ENCODE measurements at regions of chr7 and their contacts with region 1.

Region 1: GRCh38 chr7:104548868-104549267 is 220.5 kb downstream of the LHFPL3 start:
- DNase-seq: no peak
- ATAC-seq: no peak
- H3K4me3 ChIP-seq: no peak overlapping the region
- H3K27ac ChIP-seq: no peak overlapping the region
- H3K4me1 ChIP-seq: no peaks in the 10 kb centered on the region
- H3K27me3 ChIP-seq: no peaks in the 10 kb centered on the region
- CTCF ChIP-seq: 0 out of 6 replicates have a peak, but pooled peaks of 1 of the 3 experiments have one; percentile 7
- EP300 ChIP-seq: no peak
- POLR2A ChIP-seq: no peak
- RAD21 ChIP-seq: no peak

Region 2: GRCh38 chr7:104267701-104268368 is 281.0 kb before region 1 on chr7:
- CTCF ChIA-PET with region 1: no interaction called
- POLR2A ChIA-PET with region 1: no interaction called
- RAD21 ChIA-PET with region 1: no interaction called
- SMC1A ChIA-PET with region 1: no interaction called
- in situ Hi-C with region 1: no loop called
- intact Hi-C with region 1: loop called (anchors 10 kb)
- DNase-seq: no peak
- ATAC-seq: no peak
- H3K4me3 ChIP-seq: no peak overlapping the region
- H3K27ac ChIP-seq: no peak overlapping the region
- H3K4me1 ChIP-seq: no peaks in the 10 kb centered on the region
- H3K27me3 ChIP-seq: no peaks in the 10 kb centered on the region
- CTCF ChIP-seq: peak; percentile 43 to 52 (median 46); a peak in 5 of 6 replicates
- EP300 ChIP-seq: no peak
- POLR2A ChIP-seq: no peak
- RAD21 ChIP-seq: peak; percentile 31

Region 3: GRCh38 chr7:104956753-104957450 is 408.0 kb after region 1 on chr7:
- CTCF ChIA-PET with region 1: no interaction called
- POLR2A ChIA-PET with region 1: no interaction called
- RAD21 ChIA-PET with region 1: no interaction called
- SMC1A ChIA-PET with region 1: no interaction called
- in situ Hi-C with region 1: no loop called
- intact Hi-C with region 1: no loop called
- DNase-seq: peak; percentile 77
- ATAC-seq: peak; percentile 94
- H3K4me3 ChIP-seq: no peak overlapping the region
- H3K27ac ChIP-seq: peak overlapping the region; percentile 58
- H3K4me1 ChIP-seq: peaks cover 17% of the 10 kb centered on the region
- H3K27me3 ChIP-seq: no peaks in the 10 kb centered on the region
- CTCF ChIP-seq: no peak
- EP300 ChIP-seq: peak; percentile 83 to 91
- POLR2A ChIP-seq: no peak
- RAD21 ChIP-seq: no peak

Region 4: GRCh38 chr7:106480161-106480579 is 1931.3 kb after region 1 on chr7:
- CTCF ChIA-PET with region 1: no interaction called
- POLR2A ChIA-PET with region 1: no interaction called
- RAD21 ChIA-PET with region 1: no interaction called
- SMC1A ChIA-PET with region 1: no interaction called
- in situ Hi-C with region 1: no loop called
- intact Hi-C with region 1: no loop called
- DNase-seq: no peak
- ATAC-seq: peak; percentile 85
- H3K4me3 ChIP-seq: no peak overlapping the region
- H3K27ac ChIP-seq: no peak overlapping the region; the same call in 1 of the 2 replicates
- H3K4me1 ChIP-seq: peaks cover 11% of the 10 kb centered on the region
- H3K27me3 ChIP-seq: no peaks in the 10 kb centered on the region
- CTCF ChIP-seq: no peak
- EP300 ChIP-seq: peak; percentile 28 to 33; a peak in 2 of 4 replicates
- POLR2A ChIP-seq: no peak
- RAD21 ChIP-seq: no peak